ENCODE measurements at regions of chr6 and their contacts with region 1.

Region 1: GRCh38 chr6:52284460-52285176 is at the start of gene MCM3:
- DNase-seq: peak; percentile 99
- H3K4me3 Mint-ChIP-seq: no peak within 1 kb of the TSS
- H3K27ac Mint-ChIP-seq: peak within 1 kb of the TSS; percentile 3
- H3K4me1 Mint-ChIP-seq: peaks cover 54% of the 10 kb centered on the region
- H3K27me3 Mint-ChIP-seq: no peaks in the 10 kb centered on the region
- total RNA-seq, gene MCM3: 149 TPM

Region 2: DNA sequence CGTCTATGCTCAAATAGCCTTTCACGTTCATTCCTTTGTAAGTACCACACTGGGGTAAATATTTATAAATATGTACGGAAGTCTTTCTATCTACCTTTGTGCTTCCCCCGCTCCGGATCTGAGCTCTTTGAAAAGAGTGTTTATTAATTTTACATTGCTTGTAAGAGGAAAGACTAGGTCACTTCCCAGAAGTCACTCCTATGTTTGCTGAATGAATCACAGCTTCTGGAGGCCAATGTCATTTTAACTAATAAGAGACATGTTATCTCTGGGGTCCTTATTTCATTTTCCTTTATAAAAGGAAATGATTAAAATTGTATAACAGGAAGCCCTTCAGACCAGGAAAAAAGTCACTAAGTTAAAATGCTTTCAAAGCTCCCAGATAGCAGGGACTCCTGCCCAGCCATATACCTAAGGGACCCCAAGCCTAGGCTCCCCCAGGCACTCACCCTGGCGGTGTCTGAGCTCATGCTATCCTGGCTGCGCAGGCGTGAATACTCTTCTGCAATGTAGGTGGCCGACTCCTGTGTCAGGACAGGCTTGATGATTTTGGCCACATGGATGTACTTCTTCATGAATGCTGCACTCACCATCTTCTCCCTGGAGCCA is 12.7 kb before region 1 on chr6:
- CTCF ChIA-PET with region 1: interaction called, 9 read pairs
- POLR2A ChIA-PET with region 1: interaction called, 24 read pairs
- DNase-seq: no peak
- H3K4me3 Mint-ChIP-seq: no peak overlapping the region
- H3K27ac Mint-ChIP-seq: peak overlapping the region; percentile 31
- H3K4me1 Mint-ChIP-seq: peaks cover 15% of the 10 kb centered on the region
- H3K27me3 Mint-ChIP-seq: no peaks in the 10 kb centered on the region

Region 3: GRCh38 chr6:52304983-52305390 is 20.4 kb after region 1 on chr6:
- CTCF ChIA-PET with region 1: interaction called, 21 read pairs
- POLR2A ChIA-PET with region 1: interaction called, 57 read pairs
- DNase-seq: no peak
- H3K4me3 Mint-ChIP-seq: peak overlapping the region; percentile 24
- H3K27ac Mint-ChIP-seq: peak overlapping the region; percentile 67
- H3K4me1 Mint-ChIP-seq: peaks cover 52% of the 10 kb centered on the region
- H3K27me3 Mint-ChIP-seq: no peaks in the 10 kb centered on the region

Region 4: DNA sequence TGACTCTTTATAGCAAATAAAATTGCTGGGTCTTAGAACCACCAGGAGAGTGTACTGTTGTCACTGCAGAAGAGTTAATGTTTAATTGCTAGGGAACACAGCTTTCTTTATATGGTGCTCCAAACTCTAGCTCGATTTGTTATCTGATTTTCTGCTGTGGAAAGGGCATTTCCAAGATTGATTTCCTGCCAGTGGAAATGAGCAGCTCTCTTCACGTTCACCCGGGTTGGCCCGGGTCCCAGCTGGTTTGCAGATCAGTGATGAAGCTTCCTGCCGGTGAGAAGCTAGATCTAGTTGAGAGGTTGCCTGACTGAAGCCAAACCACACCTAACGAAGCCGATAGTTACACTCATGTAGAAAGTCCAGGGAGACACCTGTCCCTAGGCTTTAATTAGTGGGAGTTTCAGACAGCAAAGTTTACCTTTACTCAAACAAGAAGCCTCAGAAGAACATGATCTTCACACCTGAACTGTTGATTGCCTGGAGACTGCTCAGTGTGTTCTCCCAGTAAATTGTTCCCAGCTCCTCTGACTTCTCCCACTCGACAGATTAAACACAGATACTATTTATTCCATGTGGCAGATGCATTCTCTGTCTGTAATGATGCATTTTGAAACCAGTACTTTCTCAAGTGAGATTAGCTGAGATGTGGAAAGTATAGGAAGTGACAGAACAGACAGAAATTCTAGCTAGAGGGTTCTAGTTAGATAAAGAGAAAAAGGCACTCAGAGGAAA is 105.2 kb after region 1 on chr6:
- CTCF ChIA-PET with region 1: interaction called, 54 read pairs
- POLR2A ChIA-PET with region 1: interaction called, 75 read pairs
- DNase-seq: peak; percentile 61
- H3K4me3 Mint-ChIP-seq: peak overlapping the region; percentile 44
- H3K27ac Mint-ChIP-seq: peak overlapping the region; percentile 92
- H3K4me1 Mint-ChIP-seq: peaks cover 67% of the 10 kb centered on the region
- H3K27me3 Mint-ChIP-seq: no peaks in the 10 kb centered on the region

Region 5: DNA sequence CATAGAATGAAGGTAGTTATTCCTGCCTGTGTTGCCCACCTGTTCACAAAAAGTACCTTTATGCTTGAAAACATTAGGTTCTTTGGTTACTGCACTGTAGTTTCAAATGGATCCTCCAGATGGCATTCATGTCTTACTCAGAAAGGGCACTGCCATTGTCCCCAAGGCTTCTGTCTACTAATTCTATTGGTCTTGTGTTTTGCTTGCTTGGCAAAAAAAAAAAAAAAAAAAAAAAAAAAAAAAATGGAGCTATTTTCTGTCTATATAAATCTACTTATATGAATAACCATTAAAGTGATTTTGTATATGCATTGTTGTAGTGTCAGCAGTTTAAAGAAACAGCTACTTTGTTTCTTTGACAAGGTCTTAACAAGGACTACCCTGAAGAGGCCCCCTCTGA is 122.8 kb after region 1 on chr6:
- CTCF ChIA-PET with region 1: interaction called, 159 read pairs
- POLR2A ChIA-PET with region 1: interaction called, 4 read pairs
- DNase-seq: no peak
- H3K4me3 Mint-ChIP-seq: no peak overlapping the region
- H3K27ac Mint-ChIP-seq: no peak overlapping the region
- H3K4me1 Mint-ChIP-seq: peaks cover 5% of the 10 kb centered on the region
- H3K27me3 Mint-ChIP-seq: peaks cover 1% of the 10 kb centered on the region

Region 6: GRCh38 chr6:52664186-52664990 is 379.8 kb after region 1 on chr6:
- CTCF ChIA-PET with region 1: interaction called, 12 read pairs
- POLR2A ChIA-PET with region 1: interaction called, 9 read pairs
- DNase-seq: peak; percentile 81
- H3K4me3 Mint-ChIP-seq: no peak overlapping the region
- H3K27ac Mint-ChIP-seq: no peak overlapping the region
- H3K4me1 Mint-ChIP-seq: peaks cover 17% of the 10 kb centered on the region
- H3K27me3 Mint-ChIP-seq: no peaks in the 10 kb centered on the region

Measured in activated CD4-positive, alpha-beta memory T cell treated with anti-CD3 and anti-CD28 coated beads, Interleukin-2, amount 10 ng/mL, durations not matched to agents 7 days and 5 days (primary cell).